ENCODE measurements at regions of chr2 and their contacts with region 1.

Region 1: DNA sequence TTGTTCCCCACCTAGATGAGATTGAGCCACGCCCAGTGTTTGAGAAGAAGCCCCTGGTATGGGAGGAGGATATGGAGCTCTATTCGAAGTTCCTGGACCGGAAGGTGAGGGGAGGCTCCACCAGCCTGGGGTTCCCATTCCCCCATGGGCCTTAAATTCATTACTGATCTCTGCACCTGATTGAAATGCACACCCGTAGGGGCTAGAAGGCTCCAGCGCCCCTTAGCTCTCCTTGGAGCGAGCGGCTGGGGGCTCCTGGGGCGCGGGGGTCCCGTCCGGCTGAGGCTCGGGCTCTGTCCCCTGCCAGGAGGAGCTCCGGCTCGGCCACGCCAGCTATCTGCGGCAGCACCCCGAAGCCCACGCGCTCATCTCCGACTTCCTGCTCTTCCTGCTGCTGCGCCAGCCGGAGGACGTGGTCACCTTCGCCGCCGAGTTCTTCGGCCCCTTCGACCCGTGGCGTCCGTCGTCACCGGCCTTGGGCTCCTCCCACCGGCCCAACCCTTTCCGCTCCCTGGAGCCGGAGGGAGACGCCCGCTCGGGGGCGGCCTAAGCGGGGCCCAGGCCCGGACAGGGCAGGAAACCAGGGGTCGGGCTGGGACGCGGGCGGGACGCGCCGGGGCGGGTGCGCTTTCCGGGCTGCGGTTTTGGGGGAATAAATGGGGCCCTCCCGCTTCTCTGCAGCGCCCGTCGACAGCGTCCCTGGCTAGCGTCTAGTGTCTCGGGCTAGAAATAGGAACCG is 10.9 kb downstream of the CATIP start:
- DNase-seq: peak; percentile 64
- H3K4me3 Mint-ChIP-seq: peak overlapping the region; percentile 78
- H3K27ac Mint-ChIP-seq: peak overlapping the region; percentile 61
- H3K4me1 Mint-ChIP-seq: peaks cover 7% of the 10 kb centered on the region
- H3K27me3 Mint-ChIP-seq: peaks cover 42% of the 10 kb centered on the region

Region 2: GRCh38 chr2:218322895-218323808 is 44.4 kb before region 1 on chr2:
- intact Hi-C with region 1: loop called (anchors 5 kb)
- DNase-seq: peak; percentile 28
- H3K4me3 Mint-ChIP-seq: peak overlapping the region; percentile 84
- H3K27ac Mint-ChIP-seq: no peak overlapping the region
- H3K4me1 Mint-ChIP-seq: peaks cover 22% of the 10 kb centered on the region
- H3K27me3 Mint-ChIP-seq: peaks cover 20% of the 10 kb centered on the region

Region 3: DNA sequence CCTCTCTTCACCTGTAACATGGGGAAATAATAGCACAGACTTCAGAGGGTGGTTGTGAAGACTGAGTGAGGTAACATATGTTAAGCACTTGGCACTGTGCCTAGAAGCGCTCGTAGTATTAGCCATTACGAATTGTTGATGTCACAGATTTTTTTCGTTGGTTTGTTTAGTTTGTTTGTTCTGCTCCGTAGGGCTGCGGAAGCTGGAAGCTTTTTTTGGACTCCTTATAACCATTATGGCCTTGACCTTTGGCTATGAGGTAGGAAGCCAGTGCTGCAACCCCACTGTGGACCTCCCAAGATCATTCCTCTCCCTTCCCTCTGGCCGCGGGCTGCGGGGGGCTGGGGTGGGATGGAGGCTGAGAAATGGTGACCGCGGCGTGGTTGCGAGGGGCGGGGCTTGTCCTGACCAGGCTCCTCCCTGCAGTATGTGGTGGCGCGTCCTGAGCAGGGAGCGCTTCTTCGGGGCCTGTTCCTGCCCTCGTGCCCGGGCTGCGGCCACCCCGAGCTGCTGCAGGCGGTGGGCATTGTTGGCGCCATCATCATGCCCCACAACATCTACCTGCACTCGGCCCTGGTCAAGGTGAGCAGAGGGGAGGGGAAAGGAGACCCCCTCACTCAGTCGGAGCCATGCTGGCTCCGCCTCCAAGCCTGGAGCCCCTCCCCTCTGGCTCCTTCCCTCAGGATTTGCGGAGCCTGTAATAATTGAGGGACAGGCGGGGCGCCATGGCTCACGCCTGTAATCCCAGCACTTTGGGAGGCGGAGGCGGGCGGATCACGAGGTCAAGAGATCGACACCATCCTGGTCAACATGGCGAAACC is 20.0 kb after region 1 on chr2:
- intact Hi-C with region 1: no loop called
- DNase-seq: no peak
- H3K4me3 Mint-ChIP-seq: no peak overlapping the region
- H3K27ac Mint-ChIP-seq: no peak overlapping the region
- H3K4me1 Mint-ChIP-seq: peaks cover 6% of the 10 kb centered on the region
- H3K27me3 Mint-ChIP-seq: peaks cover 19% of the 10 kb centered on the region